HCT116 (cell line): ENCODE measurements at regions of chr2 and their contacts with region 1.

Region 1: DNA sequence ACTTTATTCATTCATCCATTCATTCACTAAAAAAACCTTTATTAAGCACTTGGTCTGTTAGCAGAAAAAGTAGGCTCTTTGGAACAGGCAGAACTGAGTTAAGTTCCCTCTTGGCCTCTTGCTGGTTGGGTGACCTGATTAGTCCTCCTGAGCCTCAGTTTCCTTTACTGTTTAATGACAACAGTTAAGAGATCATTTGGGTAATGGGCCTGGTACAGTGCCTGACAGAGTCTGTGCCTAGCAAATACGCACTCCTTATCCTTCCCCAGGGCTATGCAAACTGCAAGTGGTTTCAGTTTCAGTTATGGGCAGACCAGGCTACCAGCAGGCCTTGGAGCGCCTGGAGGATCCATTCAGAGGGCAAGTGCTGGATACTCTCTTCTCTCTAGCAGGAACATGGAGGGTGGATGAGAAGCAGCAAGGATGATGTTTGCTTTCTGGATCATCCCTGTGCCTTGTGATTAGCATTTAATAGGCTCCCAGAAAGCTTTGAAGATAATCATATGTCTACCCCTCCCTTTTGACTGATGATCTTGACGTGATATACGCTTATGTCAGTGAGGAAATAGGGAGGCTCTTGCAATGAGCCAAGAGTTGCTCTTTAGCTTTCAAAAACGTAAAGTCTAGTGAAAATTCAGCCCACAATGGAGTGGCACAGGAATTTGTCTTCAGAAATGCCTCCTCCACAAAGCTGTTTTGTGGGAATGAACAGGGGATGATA is 12.4 kb upstream of the TAF1B start:
- DNase-seq: no peak
- ATAC-seq: peak; percentile 62
- H3K4me3 ChIP-seq: peak overlapping the region in 1 of 2 experiments; percentile 34; a peak in 2 of 4 replicates
- H3K27ac ChIP-seq: peak overlapping the region; percentile 52
- H3K4me1 ChIP-seq: peaks cover 24 to 38% of the 10 kb centered on the region in 2 experiments
- H3K27me3 ChIP-seq: no peaks in the 10 kb centered on the region
- CTCF ChIP-seq: no peak
- POLR2A ChIP-seq: no peak
- RAD21 ChIP-seq: no peak

Region 2: GRCh38 chr2:9799665-9800632 is 30.9 kb before region 1 on chr2:
- CTCF ChIA-PET with region 1: no interaction called
- POLR2A ChIA-PET with region 1: no interaction called
- RAD21 ChIA-PET with region 1: no interaction called
- intact Hi-C with region 1: no loop called
- DNase-seq: peak; percentile 72
- ATAC-seq: peak; percentile 84
- H3K4me3 ChIP-seq: no peak overlapping the region
- H3K27ac ChIP-seq: peak overlapping the region; percentile 75; the same call in 1 of the 2 replicates
- H3K4me1 ChIP-seq: peaks cover 31 to 48% of the 10 kb centered on the region in 2 experiments
- H3K27me3 ChIP-seq: no peaks in the 10 kb centered on the region
- CTCF ChIP-seq: peak in 2 of 3 experiments; percentile 97 to 99; a peak in 4 of 6 replicates
- POLR2A ChIP-seq: no peak
- RAD21 ChIP-seq: no peak

Region 3: DNA sequence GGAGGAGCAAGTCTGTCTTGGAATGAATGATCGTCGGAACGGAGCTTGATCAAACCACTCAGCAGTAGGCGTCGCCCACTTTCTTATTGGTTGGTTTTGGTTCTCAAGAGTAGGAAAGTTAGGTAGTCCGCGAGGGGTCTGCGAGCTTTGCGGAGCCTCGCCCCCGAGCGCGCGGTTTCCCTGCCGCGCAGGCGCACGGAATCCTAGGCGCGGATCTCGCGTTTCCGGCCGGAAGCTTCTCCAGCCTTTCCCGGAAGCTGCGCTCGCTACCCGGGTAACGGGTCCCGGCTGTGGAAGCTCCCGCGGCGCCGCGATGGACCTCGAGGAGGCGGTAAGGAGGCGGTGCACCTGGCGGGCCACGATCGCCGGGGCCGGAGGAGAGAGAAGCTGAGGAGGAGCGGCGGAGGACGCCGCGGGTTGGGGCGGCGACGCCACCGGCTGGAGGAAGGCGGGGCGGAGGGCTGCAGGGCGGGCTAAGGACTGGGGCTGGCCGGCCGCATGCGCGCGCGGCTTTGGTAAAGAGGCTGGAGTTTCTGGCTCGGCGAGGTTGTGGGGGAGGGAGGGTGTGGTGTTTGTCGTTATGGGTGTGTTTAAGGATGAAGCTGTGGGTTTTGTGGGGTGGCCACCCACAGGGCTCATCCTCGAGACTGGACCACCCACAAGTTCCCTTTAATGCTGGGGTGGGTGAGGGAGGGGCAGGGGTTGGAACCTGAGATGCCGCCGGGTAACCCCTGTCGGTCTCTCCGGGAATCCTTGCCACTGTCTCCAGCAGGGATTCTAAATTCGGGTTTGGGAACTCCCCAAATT is 12.6 kb after region 1 on chr2 and contains the start of gene TAF1B:
- CTCF ChIA-PET with region 1: interaction called, 5 read pairs
- POLR2A ChIA-PET with region 1: interaction called, 10 read pairs
- RAD21 ChIA-PET with region 1: no interaction called
- intact Hi-C with region 1: loop called (anchors 1 kb)
- DNase-seq: peak; percentile 91
- ATAC-seq: peak; percentile 89
- H3K4me3 ChIP-seq: peak within 1 kb of the TSS; percentile 83 to 86
- H3K27ac ChIP-seq: peak within 1 kb of the TSS; percentile 88
- H3K4me1 ChIP-seq: peaks cover 3 to 20% of the 10 kb centered on the region in 2 experiments; a peak in 3 of 4 replicates
- H3K27me3 ChIP-seq: no peaks in the 10 kb centered on the region
- CTCF ChIP-seq: peak in 2 of 3 experiments; percentile 22 to 46; a peak in 3 of 6 replicates
- POLR2A ChIP-seq: peak; percentile 86
- RAD21 ChIP-seq: peak; percentile 17
- total RNA-seq, gene TAF1B: 27.9 TPM

Region 4: DNA sequence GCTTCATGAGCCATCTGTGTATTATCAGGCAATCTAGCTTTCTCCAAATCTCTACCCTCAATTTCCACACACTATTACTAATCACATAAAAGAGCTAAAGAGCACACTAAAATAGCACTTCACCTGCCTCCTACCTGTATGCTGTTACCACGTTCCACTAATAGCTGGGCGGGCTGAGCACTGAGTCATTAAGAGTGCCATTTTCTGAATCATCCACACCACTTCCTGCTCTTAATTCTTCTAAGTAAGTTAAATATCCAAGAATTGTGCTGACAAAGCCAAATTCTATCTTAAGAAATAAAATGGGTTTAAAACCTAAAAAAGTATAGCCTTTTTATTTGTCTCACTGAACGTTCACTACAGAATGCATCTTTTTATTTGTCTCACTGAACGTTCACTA is 823.2 kb after region 1 on chr2:
- CTCF ChIA-PET with region 1: no interaction called
- POLR2A ChIA-PET with region 1: no interaction called
- RAD21 ChIA-PET with region 1: no interaction called
- intact Hi-C with region 1: no loop called
- DNase-seq: peak; percentile 76
- ATAC-seq: peak; percentile 91
- H3K4me3 ChIP-seq: peak overlapping the region in 1 of 2 experiments; percentile 30; a peak in 2 of 4 replicates
- H3K27ac ChIP-seq: peak overlapping the region; percentile 59; the same call in 1 of the 2 replicates
- H3K4me1 ChIP-seq: peaks cover 19 to 45% of the 10 kb centered on the region in 2 experiments
- H3K27me3 ChIP-seq: no peaks in the 10 kb centered on the region
- CTCF ChIP-seq: no peak
- POLR2A ChIP-seq: no peak
- RAD21 ChIP-seq: peak; percentile 30; the same call in 1 of the 2 replicates